ENCODE measurements at regions of chr11 and their contacts with region 1.

Region 1: GRCh38 chr11:67239783-67240575 is 26.3 kb upstream of the GRK2 start:
- DNase-seq: peak; percentile 99
- ATAC-seq: peak; percentile 90
- H3K4me3 ChIP-seq: peak overlapping the region; percentile 89
- H3K27ac ChIP-seq: peak overlapping the region; percentile 86
- H3K4me1 ChIP-seq: peaks cover 29% of the 10 kb centered on the region
- H3K27me3 ChIP-seq: no peaks in the 10 kb centered on the region
- CTCF ChIP-seq: no peak

Region 2: DNA sequence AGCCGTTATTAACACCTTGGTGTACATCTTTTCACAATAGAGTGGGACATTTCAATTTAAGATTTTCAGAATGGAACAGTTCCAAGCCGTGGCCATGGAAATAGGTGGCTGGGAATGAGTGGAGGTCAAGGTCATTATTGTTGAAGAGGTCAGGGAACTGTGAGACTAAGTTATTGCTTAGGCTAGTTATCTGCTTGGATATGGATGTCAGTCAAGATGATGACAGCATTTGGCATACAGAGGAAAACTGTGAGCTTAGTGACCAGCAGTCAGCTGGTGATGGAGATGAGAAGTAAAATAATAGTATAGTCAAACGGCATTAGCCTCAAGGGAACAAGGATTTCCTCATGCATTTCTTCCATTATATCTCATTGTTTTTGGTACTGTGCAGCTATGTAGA is 449.3 kb before region 1 on chr11:
- CTCF ChIA-PET with region 1: no interaction called
- POLR2A ChIA-PET with region 1: no interaction called
- intact Hi-C with region 1: no loop called
- DNase-seq: no peak
- ATAC-seq: no peak
- H3K4me3 ChIP-seq: no peak overlapping the region
- H3K27ac ChIP-seq: no peak overlapping the region
- H3K4me1 ChIP-seq: peaks cover 32% of the 10 kb centered on the region
- H3K27me3 ChIP-seq: no peaks in the 10 kb centered on the region
- CTCF ChIP-seq: no peak

Region 3: DNA sequence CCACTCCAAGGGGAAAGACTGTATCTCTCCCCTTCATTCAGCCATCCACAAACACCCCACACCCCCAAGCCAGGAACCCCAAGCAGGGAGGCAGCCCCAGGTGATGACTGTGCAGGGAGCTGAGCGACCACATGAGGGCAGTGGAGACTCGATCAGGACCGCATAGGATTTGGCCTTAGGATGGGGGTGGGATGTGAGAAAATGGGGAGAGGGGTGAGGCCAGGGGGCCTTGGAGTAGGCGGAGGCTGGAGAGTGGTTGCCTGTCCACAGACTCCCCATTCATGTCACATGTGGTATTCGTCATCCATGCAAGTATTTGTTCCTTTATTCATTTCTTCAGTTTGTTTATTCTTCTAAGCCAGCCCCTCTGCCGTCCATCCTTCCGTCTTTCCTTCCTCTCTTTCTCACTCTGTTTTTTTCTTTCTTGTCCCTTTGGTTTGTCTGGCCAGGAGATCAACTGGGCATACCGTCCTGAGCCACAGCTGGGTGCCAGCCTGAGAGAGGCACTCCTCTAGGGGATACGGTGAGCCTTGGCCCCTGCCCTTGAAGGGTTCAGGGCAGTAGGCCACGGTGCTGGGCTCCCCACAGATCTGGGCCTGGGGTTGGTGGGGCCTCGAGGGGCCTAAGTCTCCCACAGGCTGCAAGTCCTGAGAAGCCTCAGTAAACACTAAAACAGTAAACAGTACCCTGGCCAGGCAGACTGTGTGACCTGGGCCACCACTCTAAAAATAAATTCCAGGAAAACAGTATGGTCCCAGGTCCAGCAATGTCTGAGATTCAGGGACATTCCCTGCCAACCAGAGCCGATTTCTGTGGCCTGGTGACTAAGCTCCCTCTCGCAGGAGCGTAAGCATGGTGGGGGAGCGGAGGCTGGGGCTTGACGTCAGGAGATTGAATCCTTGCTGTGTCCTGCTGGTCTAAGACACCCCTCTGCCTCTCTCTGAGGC is 185.8 kb before region 1 on chr11:
- CTCF ChIA-PET with region 1: interaction called, 4 read pairs
- POLR2A ChIA-PET with region 1: no interaction called
- intact Hi-C with region 1: loop called (anchors 10 kb)
- DNase-seq: peak; percentile 72
- ATAC-seq: peak; percentile 18
- H3K4me3 ChIP-seq: no peak overlapping the region
- H3K27ac ChIP-seq: peak overlapping the region; percentile 98
- H3K4me1 ChIP-seq: peaks cover 37% of the 10 kb centered on the region
- H3K27me3 ChIP-seq: no peaks in the 10 kb centered on the region
- CTCF ChIP-seq: peak; percentile 94

Region 4: DNA sequence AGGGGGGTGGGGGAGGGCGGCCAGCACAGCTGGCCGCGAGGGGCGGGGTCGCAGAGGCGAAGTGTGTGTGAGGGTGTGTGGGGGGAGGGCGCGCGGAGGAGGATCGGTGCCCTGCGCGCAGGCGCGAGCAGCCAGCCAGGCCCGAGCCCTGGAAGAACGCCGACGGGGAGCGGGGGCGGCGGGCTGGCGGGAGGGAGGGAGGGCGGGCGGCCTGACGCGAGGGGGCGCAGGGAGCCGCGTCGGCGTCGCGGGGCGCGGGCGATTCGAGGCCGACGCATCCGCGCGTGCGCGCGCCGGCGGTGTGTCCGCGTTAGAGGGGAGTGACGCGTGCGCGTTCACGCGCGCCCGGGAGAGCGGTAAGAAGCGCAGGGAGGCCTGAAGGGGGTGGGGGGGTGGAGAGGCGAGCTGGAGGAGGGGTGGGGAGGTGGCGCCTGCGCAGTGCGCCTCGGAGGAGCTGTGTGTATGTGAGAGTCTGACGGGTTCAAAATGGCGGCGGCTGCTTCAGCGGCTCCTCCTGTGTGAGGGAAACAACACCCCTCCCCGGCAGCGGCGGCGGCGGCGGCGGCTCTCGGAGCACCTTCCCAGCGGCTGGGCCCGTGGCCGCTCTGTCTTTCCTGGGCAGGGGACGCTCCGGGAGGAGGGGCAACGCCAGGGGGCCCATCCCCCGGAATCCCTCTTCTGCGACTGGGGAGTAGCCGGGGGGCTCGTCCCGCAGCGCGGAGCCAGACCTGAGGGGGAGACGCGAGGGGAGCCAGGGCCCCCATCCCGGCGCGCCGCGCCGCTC is 121.0 kb before region 1 on chr11 and contains the start of gene KDM2A:
- CTCF ChIA-PET with region 1: interaction called, 4 read pairs
- POLR2A ChIA-PET with region 1: interaction called, 3 read pairs
- intact Hi-C with region 1: loop called (anchors 2 kb)
- DNase-seq: peak; percentile 99
- ATAC-seq: peak; percentile 82
- H3K4me3 ChIP-seq: peak within 1 kb of the TSS; percentile 97
- H3K27ac ChIP-seq: peak within 1 kb of the TSS; percentile 34; the same call in 1 of the 2 replicates
- H3K4me1 ChIP-seq: peaks cover 6% of the 10 kb centered on the region; the same call in 1 of the 2 replicates
- H3K27me3 ChIP-seq: no peaks in the 10 kb centered on the region
- CTCF ChIP-seq: no peak
- total RNA-seq, gene KDM2A: 65.3 and 87.1 TPM in 2 replicates

Region 5: GRCh38 chr11:67160874-67161783 is 78.8 kb before region 1 on chr11:
- CTCF ChIA-PET with region 1: no interaction called
- POLR2A ChIA-PET with region 1: no interaction called
- intact Hi-C with region 1: loop called (anchors 5 kb)
- DNase-seq: peak; percentile 74
- ATAC-seq: peak; percentile 89
- H3K4me3 ChIP-seq: no peak overlapping the region
- H3K27ac ChIP-seq: peak overlapping the region; percentile 58
- H3K4me1 ChIP-seq: peaks cover 15% of the 10 kb centered on the region
- H3K27me3 ChIP-seq: no peaks in the 10 kb centered on the region
- CTCF ChIP-seq: no peak

Region 6: GRCh38 chr11:67195971-67196456 is 44.0 kb before region 1 on chr11:
- CTCF ChIA-PET with region 1: no interaction called
- POLR2A ChIA-PET with region 1: no interaction called
- intact Hi-C with region 1: loop called (anchors 5 kb)
- DNase-seq: peak; percentile 84
- ATAC-seq: peak; percentile 91
- H3K4me3 ChIP-seq: 0 out of 2 replicates have a peak overlapping the region, but pooled peaks have one; percentile 6
- H3K27ac ChIP-seq: peak overlapping the region; percentile 49
- H3K4me1 ChIP-seq: peaks cover 23% of the 10 kb centered on the region
- H3K27me3 ChIP-seq: no peaks in the 10 kb centered on the region
- CTCF ChIP-seq: peak; percentile 33; the same call in 1 of the 2 replicates

Region 7: GRCh38 chr11:67356864-67357561 is 117.0 kb after region 1 on chr11:
- CTCF ChIA-PET with region 1: no interaction called
- POLR2A ChIA-PET with region 1: no interaction called
- intact Hi-C with region 1: no loop called
- DNase-seq: peak; percentile 90
- ATAC-seq: peak; percentile 2
- H3K4me3 ChIP-seq: no peak overlapping the region
- H3K27ac ChIP-seq: peak overlapping the region; percentile 93
- H3K4me1 ChIP-seq: peaks cover 59% of the 10 kb centered on the region
- H3K27me3 ChIP-seq: no peaks in the 10 kb centered on the region
- CTCF ChIP-seq: peak; percentile 99

Measured in PC-3 (cell line).